ENCODE measurements at regions of chr10 and their contacts with region 1.

Region 1: GRCh38 chr10:90751107-90751997 is 106.5 kb downstream of the HTR7 start:
- DNase-seq: peak; percentile 22
- H3K4me3 ChIP-seq: no peak overlapping the region
- H3K27ac ChIP-seq: no peak overlapping the region
- H3K4me1 ChIP-seq: no peaks in the 10 kb centered on the region
- H3K27me3 ChIP-seq: peaks cover 75% of the 10 kb centered on the region
- CTCF ChIP-seq: peak; percentile 76

Region 2: GRCh38 chr10:90723416-90724068 is 27.8 kb before region 1 on chr10:
- CTCF ChIA-PET with region 1: no interaction called
- POLR2A ChIA-PET with region 1: no interaction called
- intact Hi-C with region 1: no loop called
- DNase-seq: no peak
- H3K4me3 ChIP-seq: no peak overlapping the region
- H3K27ac ChIP-seq: no peak overlapping the region
- H3K4me1 ChIP-seq: no peaks in the 10 kb centered on the region
- H3K27me3 ChIP-seq: no peaks in the 10 kb centered on the region
- CTCF ChIP-seq: no peak

Region 3: GRCh38 chr10:90787393-90788198 is 36.2 kb after region 1 on chr10:
- CTCF ChIA-PET with region 1: no interaction called
- POLR2A ChIA-PET with region 1: no interaction called
- intact Hi-C with region 1: loop called (anchors 5 kb)
- DNase-seq: peak; percentile 40
- H3K4me3 ChIP-seq: no peak overlapping the region
- H3K27ac ChIP-seq: no peak overlapping the region
- H3K4me1 ChIP-seq: no peaks in the 10 kb centered on the region
- H3K27me3 ChIP-seq: peaks cover 80% of the 10 kb centered on the region
- CTCF ChIP-seq: peak; percentile 85

Region 4: DNA sequence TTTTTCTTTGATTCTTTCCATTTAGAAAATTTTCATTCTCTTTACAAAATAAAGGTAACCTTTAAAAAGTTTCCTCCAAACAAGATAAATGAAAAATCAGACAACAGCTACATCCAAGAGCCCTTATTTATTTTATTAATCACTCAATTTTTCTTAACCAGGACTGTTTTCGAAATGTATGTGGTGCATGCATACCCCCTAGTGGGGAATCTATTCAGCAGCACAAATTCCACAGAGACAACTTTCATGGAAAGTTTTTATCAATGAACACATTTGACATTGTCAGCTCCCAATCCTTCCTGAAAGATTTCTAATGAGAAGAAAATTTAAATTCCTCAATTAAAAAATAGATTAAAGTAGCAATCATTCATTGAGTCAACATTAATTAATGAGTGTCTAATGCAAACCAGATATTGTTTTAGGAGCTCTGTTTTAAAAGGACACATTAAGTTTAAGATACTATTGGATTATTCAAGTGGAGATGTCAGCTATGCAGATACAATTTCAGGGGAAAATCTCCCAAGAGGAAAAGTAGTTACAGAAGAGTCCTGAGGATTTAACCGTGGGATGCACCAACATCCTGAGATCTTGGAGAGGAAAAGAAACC is 111.7 kb after region 1 on chr10:
- CTCF ChIA-PET with region 1: no interaction called
- POLR2A ChIA-PET with region 1: no interaction called
- intact Hi-C with region 1: loop called (anchors 2 kb)
- DNase-seq: peak; percentile 46
- H3K4me3 ChIP-seq: no peak overlapping the region
- H3K27ac ChIP-seq: no peak overlapping the region
- H3K4me1 ChIP-seq: no peaks in the 10 kb centered on the region
- H3K27me3 ChIP-seq: peaks cover 80% of the 10 kb centered on the region
- CTCF ChIP-seq: peak; percentile 70

Region 5: GRCh38 chr10:90871766-90872647 is 120.7 kb after region 1 on chr10 and contains the start of gene RPP30:
- CTCF ChIA-PET with region 1: no interaction called
- POLR2A ChIA-PET with region 1: no interaction called
- intact Hi-C with region 1: loop called (anchors 2 kb)
- DNase-seq: peak; percentile 87
- H3K4me3 ChIP-seq: peak within 1 kb of the TSS; percentile 87
- H3K27ac ChIP-seq: peak within 1 kb of the TSS; percentile 66
- H3K4me1 ChIP-seq: peaks cover 10% of the 10 kb centered on the region
- H3K27me3 ChIP-seq: peaks cover 11% of the 10 kb centered on the region
- CTCF ChIP-seq: no peak
- total RNA-seq, gene RPP30: 65.8 and 74.5 TPM in 2 replicates

Region 6: GRCh38 chr10:91088300-91089140 is 337.2 kb after region 1 on chr10:
- CTCF ChIA-PET with region 1: no interaction called
- POLR2A ChIA-PET with region 1: no interaction called
- intact Hi-C with region 1: no loop called
- DNase-seq: peak; percentile 14
- H3K4me3 ChIP-seq: no peak overlapping the region
- H3K27ac ChIP-seq: no peak overlapping the region
- H3K4me1 ChIP-seq: no peaks in the 10 kb centered on the region
- H3K27me3 ChIP-seq: peaks cover 5% of the 10 kb centered on the region
- CTCF ChIP-seq: no peak; the same call in 1 of the 2 replicates

Region 7: DNA sequence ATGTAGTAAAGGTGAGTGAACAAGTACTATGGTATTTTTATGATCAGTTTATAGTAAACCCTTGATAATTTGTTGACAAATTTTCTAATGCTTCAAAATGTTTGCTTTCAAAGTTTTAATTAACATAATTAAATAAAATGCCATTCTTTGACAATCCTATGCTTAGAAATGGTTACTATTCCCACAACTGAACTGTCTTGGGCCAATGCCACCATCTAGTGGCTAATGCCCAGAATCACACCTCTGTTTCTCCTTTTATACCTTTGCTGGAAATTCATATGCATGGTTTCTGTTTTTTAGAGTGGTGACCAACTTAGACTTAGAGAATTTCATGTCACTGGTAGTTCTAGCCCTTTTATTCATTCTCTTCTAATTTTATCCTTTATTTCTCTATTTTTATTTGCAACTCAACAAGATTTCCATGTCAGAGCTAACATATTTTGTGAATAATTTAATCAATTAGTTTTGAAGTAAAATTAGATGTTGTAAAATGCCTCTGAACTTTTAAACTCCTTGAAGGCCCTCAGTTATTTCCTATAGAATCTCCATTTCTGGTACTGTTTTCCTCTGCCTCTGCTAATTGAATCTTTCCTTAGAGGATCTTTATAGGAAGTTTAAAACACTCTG is 500.2 kb after region 1 on chr10:
- CTCF ChIA-PET with region 1: no interaction called
- POLR2A ChIA-PET with region 1: no interaction called
- intact Hi-C with region 1: loop called (anchors 10 kb)
- DNase-seq: peak; percentile 71
- H3K4me3 ChIP-seq: no peak overlapping the region
- H3K27ac ChIP-seq: no peak overlapping the region
- H3K4me1 ChIP-seq: no peaks in the 10 kb centered on the region
- H3K27me3 ChIP-seq: no peaks in the 10 kb centered on the region
- CTCF ChIP-seq: peak; percentile 86

Measured in A673 (cell line).